Right lobe of liver (tissue), 6 donors: ENCODE measurements at regions of chr1 and their contacts with region 1.

Region 1: GRCh38 chr1:54406339-54407153 is at the start of gene SSBP3:
- DNase-seq: peak; percentile 94 to 96 (median 95)
- ATAC-seq: peak; percentile 85 to 94 (median 90)
- H3K4me3 ChIP-seq: peak within 1 kb of the TSS; percentile 65 to 79 (median 79)
- H3K27ac ChIP-seq: peak within 1 kb of the TSS; percentile 67 to 86 (median 83)
- H3K4me1 ChIP-seq: peaks cover 0 to 8% (median 3%) of the 10 kb centered on the region in 4 donors
- H3K27me3 ChIP-seq: no peaks in the 10 kb centered on the region
- CTCF ChIP-seq: no peak
- POLR2A ChIP-seq: peak; percentile 96
- total RNA-seq, gene SSBP3: 19.4 to 34.1 (median 24.4) TPM

Region 2: GRCh38 chr1:54273092-54273794 is 133.3 kb before region 1 on chr1:
- intact Hi-C with region 1: loop called in 1 of 2 experiments (anchors 5 kb)
- DNase-seq: peak; percentile 90 to 97 (median 96)
- ATAC-seq: peak; percentile 54 to 76 (median 72)
- H3K4me3 ChIP-seq: peak overlapping the region in 2 of 3 donors; percentile 17 to 19
- H3K27ac ChIP-seq: peak overlapping the region; percentile 92 to 98 (median 98)
- H3K4me1 ChIP-seq: peaks cover 0 to 70% (median 30%) of the 10 kb centered on the region in 4 donors
- H3K27me3 ChIP-seq: no peaks in the 10 kb centered on the region
- CTCF ChIP-seq: peak in 3 of 4 donors; percentile 30 to 46 (median 34)
- POLR2A ChIP-seq: peak; percentile 74

Region 3: GRCh38 chr1:54309631-54310366 is 96.7 kb before region 1 on chr1:
- intact Hi-C with region 1: loop called in 1 of 2 experiments (anchors 10 kb)
- DNase-seq: no peak
- ATAC-seq: peak in 2 of 4 donors; percentile 6 to 8
- H3K4me3 ChIP-seq: no peak overlapping the region
- H3K27ac ChIP-seq: no peak overlapping the region
- H3K4me1 ChIP-seq: no peaks in the 10 kb centered on the region
- H3K27me3 ChIP-seq: no peaks in the 10 kb centered on the region
- CTCF ChIP-seq: no peak
- POLR2A ChIP-seq: no peak

Region 4: GRCh38 chr1:54488779-54489626 is 82.5 kb after region 1 on chr1:
- intact Hi-C with region 1: loop called (anchors 5 kb)
- DNase-seq: peak; percentile 82 to 83 (median 83)
- ATAC-seq: peak; percentile 70 to 80 (median 74)
- H3K4me3 ChIP-seq: peak overlapping the region; percentile 57 to 59 (median 57)
- H3K27ac ChIP-seq: peak overlapping the region; percentile 60 to 86 (median 85)
- H3K4me1 ChIP-seq: peaks cover 0 to 19% (median 8%) of the 10 kb centered on the region in 4 donors
- H3K27me3 ChIP-seq: no peaks in the 10 kb centered on the region
- CTCF ChIP-seq: peak; percentile 96 to 98 (median 97)
- POLR2A ChIP-seq: no peak